ENCODE measurements at regions of chr19 and their contacts with region 1.

Region 1: DNA sequence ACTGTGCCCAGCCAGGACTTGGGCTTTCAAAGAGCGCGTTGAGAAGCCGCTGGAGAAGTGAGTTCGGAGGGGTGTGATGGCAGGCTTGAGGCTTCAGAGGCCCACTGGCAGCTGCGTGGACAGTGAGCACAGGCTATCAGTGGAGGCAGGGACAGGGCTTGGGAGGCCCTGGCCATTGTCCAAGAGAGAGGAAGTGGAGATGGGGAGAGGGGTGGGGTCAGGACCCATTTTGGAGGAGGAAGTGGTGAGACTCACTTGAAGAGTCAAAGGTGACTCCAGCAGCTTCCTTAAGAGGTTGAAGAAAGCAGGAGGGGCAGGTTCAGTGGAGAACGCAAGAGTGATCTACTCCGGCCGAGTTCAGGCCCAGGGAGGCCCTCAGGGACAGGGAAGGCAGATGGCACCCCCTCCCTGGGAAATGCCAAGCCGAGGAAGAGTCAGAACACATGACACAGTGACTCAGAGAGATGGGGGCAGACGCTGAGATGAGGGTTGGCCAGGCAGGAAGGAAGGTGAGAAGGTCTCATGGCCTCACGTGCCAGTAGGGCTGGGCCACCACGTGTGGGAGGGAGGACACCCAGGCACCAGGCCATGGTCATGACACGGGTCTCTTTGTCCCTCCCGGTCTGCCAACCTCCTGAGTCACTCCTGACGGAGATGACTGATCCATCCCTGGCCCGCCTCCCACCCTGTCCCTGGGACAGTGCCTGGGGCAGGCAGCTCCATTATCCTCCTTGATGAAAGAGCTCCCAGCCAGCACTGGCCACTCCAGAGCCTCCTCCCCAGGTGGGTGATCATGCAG is 10.1 kb upstream of the CD22 start:
- DNase-seq: no peak
- ATAC-seq: peak; percentile 26
- H3K4me3 Mint-ChIP-seq: peak overlapping the region; percentile 71
- H3K27ac Mint-ChIP-seq: peak overlapping the region; percentile 96
- H3K4me1 Mint-ChIP-seq: peaks cover 89% of the 10 kb centered on the region
- H3K27me3 Mint-ChIP-seq: no peaks in the 10 kb centered on the region
- CTCF ChIP-seq: no peak

Region 2: GRCh38 chr19:35279985-35280821 is 38.6 kb before region 1 on chr19:
- CTCF ChIA-PET with region 1: no interaction called
- POLR2A ChIA-PET with region 1: interaction called, 26 read pairs
- intact Hi-C with region 1: no loop called
- DNase-seq: no peak
- ATAC-seq: peak; percentile 33
- H3K4me3 Mint-ChIP-seq: no peak overlapping the region
- H3K27ac Mint-ChIP-seq: peak overlapping the region; percentile 75
- H3K4me1 Mint-ChIP-seq: peaks cover 45% of the 10 kb centered on the region
- H3K27me3 Mint-ChIP-seq: no peaks in the 10 kb centered on the region
- CTCF ChIP-seq: no peak

Region 3: DNA sequence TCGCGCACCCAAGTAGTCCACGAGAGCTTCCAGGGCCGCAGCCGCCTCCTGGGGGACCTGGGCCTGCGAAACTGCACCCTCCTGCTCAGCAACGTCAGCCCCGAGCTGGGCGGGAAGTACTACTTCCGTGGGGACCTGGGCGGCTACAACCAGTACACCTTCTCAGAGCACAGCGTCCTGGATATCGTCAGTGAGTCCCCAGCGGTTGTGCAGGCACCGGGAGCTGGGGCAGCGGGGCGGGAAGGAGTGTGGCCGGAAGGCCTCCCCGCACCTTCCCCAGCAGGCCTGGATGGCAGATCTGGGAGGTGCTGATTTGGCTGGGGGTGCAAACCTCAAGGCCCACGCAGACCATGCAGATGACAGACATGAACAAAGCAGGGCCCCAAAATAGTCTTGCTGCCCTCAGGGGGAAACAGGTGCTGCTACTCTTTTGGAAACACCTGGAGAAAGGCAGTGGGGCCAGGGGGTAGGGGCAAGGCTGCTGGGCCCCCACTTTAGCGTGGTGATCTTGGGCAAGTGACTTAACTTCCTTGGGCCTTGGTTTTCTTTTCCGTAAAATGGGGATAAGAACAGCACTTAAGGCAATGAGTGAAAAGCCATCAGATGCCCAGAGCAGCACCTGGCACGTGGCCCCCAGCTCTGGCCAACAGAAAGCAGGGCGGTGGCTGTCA is 22.9 kb before region 1 on chr19:
- CTCF ChIA-PET with region 1: no interaction called
- POLR2A ChIA-PET with region 1: interaction called, 14 read pairs
- intact Hi-C with region 1: no loop called
- DNase-seq: peak; percentile 50
- ATAC-seq: peak; percentile 80
- H3K4me3 Mint-ChIP-seq: peak overlapping the region; percentile 12
- H3K27ac Mint-ChIP-seq: peak overlapping the region; percentile 48
- H3K4me1 Mint-ChIP-seq: peaks cover 24% of the 10 kb centered on the region
- H3K27me3 Mint-ChIP-seq: no peaks in the 10 kb centered on the region
- CTCF ChIP-seq: no peak

Region 4: DNA sequence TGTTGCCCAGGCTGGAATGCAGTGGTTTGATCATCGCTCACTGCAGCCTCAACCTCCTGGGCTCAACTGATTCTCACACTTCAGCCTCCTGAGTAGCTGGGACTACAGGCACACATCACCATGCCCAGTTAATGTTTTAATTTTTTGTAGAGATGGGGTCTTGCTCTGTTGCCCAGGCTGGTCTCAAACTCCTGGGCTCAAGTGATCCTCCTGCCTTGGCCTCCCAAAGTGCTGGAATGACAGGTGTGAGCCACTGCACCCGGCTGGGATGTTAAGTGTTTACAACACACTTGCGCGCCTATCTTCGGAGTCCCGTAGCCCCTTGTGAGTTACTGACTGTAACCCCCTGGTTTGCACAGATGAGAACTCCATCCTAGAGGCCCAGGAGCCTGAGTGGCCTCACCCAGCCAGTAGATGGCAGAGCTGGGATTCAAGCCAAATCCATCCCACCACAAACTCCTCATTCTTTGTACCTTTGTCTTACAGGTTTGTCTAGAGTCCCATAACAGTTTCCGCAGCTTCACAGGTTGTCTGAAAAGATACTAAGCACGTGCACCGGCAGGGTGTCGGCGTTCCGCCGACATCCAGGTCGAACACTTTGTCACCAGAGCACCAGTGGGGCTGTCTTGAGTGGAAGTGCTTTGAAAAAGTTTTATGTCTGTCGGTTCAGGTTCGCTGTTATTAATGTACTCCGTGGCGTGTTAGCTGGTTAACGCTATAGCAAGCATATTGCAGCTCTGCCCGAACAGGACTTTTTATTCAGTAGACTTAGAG is 12.2 kb before region 1 on chr19:
- CTCF ChIA-PET with region 1: interaction called, 6 read pairs
- POLR2A ChIA-PET with region 1: interaction called, 6 read pairs
- intact Hi-C with region 1: loop called (anchors 2 kb)
- DNase-seq: no peak
- ATAC-seq: peak; percentile 60
- H3K4me3 Mint-ChIP-seq: no peak overlapping the region
- H3K27ac Mint-ChIP-seq: peak overlapping the region; percentile 12
- H3K4me1 Mint-ChIP-seq: peaks cover 56% of the 10 kb centered on the region
- H3K27me3 Mint-ChIP-seq: no peaks in the 10 kb centered on the region
- CTCF ChIP-seq: no peak

Region 5: GRCh38 chr19:35337097-35337983 is 18.5 kb after region 1 on chr19:
- CTCF ChIA-PET with region 1: interaction called, 10 read pairs
- POLR2A ChIA-PET with region 1: interaction called, 304 read pairs
- intact Hi-C with region 1: no loop called
- DNase-seq: no peak
- ATAC-seq: peak; percentile 47
- H3K4me3 Mint-ChIP-seq: peak overlapping the region; percentile 72
- H3K27ac Mint-ChIP-seq: peak overlapping the region; percentile 95
- H3K4me1 Mint-ChIP-seq: peaks cover 86% of the 10 kb centered on the region
- H3K27me3 Mint-ChIP-seq: no peaks in the 10 kb centered on the region
- CTCF ChIP-seq: no peak

Region 6: GRCh38 chr19:35380450-35381124 is 61.7 kb after region 1 on chr19:
- CTCF ChIA-PET with region 1: no interaction called
- POLR2A ChIA-PET with region 1: no interaction called
- intact Hi-C with region 1: no loop called
- DNase-seq: no peak
- ATAC-seq: no peak
- H3K4me3 Mint-ChIP-seq: no peak overlapping the region
- H3K27ac Mint-ChIP-seq: no peak overlapping the region
- H3K4me1 Mint-ChIP-seq: peaks cover 20% of the 10 kb centered on the region
- H3K27me3 Mint-ChIP-seq: peaks cover 5% of the 10 kb centered on the region
- CTCF ChIP-seq: no peak

Measured in activated B cell treated with CpG ODN at 0.5 μM for 24 hours (primary cell).